ENCODE measurements at regions of chr1 and their contacts with region 1.

Region 1: DNA sequence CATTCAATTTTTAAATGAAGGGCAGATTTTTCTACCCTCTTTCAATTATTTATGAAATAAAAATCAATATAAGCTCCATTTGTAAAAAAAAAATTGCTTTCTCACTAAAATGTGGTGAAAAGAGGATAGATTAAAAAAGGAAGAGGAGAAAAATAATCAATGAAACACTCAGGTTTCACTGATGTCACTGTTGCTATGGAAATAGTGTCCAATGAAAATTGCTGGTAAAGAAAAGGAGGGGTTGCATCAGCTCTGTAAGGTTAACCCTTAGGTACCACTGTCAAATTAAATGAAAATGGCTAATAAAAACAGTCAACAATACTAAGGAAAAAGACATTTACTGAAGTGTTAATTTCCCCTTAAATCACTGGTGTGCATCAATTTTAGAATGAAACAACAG is 91.6 kb upstream of the TTC39A start:
- DNase-seq: no peak
- CTCF ChIP-seq: no peak

Region 2: DNA sequence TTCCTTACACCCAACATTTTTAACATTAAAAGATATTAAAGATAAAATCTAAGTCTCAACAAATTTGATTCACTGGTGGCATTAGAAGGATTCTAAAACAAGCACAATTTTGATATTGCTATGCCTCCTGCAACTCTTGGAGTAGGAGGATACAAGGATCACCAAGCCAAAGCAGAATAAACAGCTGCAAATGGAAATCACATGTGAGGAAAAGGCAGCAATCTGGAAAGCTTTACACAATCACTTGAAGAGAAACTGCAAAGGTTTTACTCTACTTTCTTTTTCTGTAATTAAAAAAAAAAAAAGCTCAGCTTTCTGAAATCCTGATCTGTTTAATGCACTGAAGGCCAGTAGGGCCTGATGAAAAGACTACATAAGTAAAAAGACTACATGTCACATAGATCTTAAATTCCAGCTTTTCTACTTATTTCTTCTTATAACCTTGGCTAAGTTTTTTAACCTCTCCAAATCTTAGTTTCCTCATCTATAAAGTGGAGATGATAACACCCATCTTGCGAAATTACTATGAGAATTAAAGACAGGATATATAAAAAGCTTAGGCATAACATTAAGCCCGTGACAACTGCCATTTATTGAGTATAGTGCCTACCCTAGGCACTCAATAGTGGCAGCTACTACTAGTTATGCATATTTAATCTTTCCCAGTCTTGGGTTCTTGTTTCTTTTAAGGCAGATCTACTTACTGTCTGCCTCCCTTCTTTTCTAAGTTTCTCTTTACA is 23.6 kb after region 1 on chr1:
- CTCF ChIA-PET with region 1: interaction called, 13 read pairs
- POLR2A ChIA-PET with region 1: no interaction called
- DNase-seq: no peak
- CTCF ChIP-seq: no peak

Measured in GM10248 (cell line).